Activated CD4-positive, alpha-beta memory T cell treated with anti-CD3 and anti-CD28 coated beads, Interleukin-2, amount 10 ng/mL, durations not matched to agents 7 days and 5 days (primary cell): ENCODE measurements at regions of chr11 and their contacts with region 1.

Region 1: DNA sequence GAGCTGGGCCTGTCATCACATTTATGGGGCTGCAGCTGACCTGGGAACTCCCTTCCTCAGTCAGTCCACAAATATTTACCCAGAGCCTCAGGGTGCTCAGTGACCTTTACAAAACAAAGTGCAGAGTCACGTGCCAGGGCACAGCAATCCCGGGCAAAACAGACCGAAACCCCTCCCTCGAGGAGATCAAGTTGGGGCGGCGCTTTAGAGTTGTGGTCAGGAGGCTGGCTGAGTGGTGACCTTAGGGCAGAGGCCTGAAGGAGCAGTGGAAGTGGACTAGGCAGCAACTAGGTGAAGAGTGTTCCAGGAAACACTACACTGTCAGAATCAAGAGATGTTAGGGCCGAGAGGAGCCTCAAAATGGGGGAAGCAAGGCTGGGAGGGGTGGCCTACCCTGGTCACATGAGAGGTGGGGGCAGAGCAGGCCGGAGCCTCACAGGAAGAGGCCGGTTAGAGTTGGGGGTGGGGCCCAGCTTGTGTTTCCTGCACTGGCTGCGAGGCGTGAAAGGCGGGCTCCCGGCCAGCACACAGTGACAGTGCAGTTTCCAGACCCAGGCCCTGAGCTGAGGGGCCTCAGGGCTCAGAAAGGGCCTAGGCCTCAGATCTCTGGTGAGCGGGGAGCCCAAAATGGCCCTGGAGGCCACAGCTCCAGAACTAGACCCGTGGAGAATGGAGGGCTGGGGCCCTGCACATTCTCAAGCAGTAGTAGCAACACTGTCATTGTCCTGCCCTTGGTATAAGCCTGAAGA is 3.7 kb upstream of the NEAT1 start:
- DNase-seq: peak; percentile 95
- H3K4me3 Mint-ChIP-seq: peak overlapping the region; percentile 97
- H3K27ac Mint-ChIP-seq: peak overlapping the region; percentile 99
- H3K4me1 Mint-ChIP-seq: peaks cover 47% of the 10 kb centered on the region
- H3K27me3 Mint-ChIP-seq: peaks cover 5% of the 10 kb centered on the region

Region 2: GRCh38 chr11:65329944-65330403 is 88.9 kb before region 1 on chr11:
- CTCF ChIA-PET with region 1: interaction called, 3 read pairs
- POLR2A ChIA-PET with region 1: interaction called, 21 read pairs
- DNase-seq: peak; percentile 82
- H3K4me3 Mint-ChIP-seq: no peak overlapping the region
- H3K27ac Mint-ChIP-seq: no peak overlapping the region
- H3K4me1 Mint-ChIP-seq: peaks cover 14% of the 10 kb centered on the region
- H3K27me3 Mint-ChIP-seq: no peaks in the 10 kb centered on the region

Region 3: DNA sequence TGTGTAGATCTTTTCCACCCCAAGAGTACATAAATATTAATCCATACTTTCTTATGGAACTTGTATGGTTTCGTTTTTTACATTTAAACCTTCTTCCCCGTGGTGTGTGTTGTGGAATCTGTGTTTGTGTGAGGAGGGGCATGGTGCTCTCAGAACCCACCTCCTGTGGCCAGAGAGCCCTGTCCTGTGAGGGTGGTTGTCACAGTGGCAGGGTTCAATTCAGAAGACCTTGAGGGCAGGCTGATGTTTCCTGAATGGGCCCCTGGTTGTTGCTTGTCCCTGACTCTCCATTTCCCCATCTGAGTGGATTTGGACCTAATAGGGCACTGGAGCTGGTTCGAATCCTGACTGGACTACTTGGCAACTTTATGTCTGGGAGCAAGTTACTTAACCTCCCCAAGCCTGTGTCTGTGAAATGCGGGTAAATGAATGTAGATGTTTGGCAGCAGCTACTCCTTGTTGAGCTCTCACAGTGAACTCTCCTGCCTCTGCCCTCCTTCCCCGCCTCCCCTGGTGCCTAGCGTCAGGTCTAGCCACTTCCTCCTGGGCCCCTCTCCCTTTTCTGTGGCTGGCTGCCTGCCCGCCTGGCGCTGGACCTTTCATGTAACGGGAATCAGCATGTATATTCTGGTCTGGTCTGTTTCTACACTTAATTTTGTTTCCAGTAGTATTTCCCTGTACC is 11.0 kb after region 1 on chr11:
- CTCF ChIA-PET with region 1: interaction called, 34 read pairs
- POLR2A ChIA-PET with region 1: interaction called, 373 read pairs
- DNase-seq: peak; percentile 67
- H3K4me3 Mint-ChIP-seq: peak overlapping the region; percentile 97
- H3K27ac Mint-ChIP-seq: peak overlapping the region; percentile 99
- H3K4me1 Mint-ChIP-seq: peaks cover 81% of the 10 kb centered on the region
- H3K27me3 Mint-ChIP-seq: no peaks in the 10 kb centered on the region

Region 4: DNA sequence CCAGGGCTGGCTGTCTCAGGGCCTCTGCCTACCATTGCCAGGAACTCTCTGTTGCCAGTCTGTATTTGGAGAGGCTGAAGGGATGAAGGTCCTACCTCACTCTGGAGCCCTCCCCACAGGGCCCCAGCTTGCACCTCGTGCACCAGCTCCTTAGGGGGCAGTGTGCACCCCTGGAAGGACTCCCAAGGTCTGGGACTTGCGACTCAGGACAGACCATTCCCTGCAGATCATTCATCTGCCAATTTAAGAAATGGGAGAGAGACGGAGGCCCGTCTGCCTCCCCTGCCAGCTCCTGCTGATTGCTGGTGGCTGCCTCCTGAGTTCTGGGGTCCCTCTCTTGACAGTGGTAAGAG is 52.5 kb after region 1 on chr11:
- CTCF ChIA-PET with region 1: interaction called, 20 read pairs
- POLR2A ChIA-PET with region 1: interaction called, 670 read pairs
- DNase-seq: no peak
- H3K4me3 Mint-ChIP-seq: no peak overlapping the region
- H3K27ac Mint-ChIP-seq: peak overlapping the region; percentile 96
- H3K4me1 Mint-ChIP-seq: peaks cover 38% of the 10 kb centered on the region
- H3K27me3 Mint-ChIP-seq: no peaks in the 10 kb centered on the region

Region 5: DNA sequence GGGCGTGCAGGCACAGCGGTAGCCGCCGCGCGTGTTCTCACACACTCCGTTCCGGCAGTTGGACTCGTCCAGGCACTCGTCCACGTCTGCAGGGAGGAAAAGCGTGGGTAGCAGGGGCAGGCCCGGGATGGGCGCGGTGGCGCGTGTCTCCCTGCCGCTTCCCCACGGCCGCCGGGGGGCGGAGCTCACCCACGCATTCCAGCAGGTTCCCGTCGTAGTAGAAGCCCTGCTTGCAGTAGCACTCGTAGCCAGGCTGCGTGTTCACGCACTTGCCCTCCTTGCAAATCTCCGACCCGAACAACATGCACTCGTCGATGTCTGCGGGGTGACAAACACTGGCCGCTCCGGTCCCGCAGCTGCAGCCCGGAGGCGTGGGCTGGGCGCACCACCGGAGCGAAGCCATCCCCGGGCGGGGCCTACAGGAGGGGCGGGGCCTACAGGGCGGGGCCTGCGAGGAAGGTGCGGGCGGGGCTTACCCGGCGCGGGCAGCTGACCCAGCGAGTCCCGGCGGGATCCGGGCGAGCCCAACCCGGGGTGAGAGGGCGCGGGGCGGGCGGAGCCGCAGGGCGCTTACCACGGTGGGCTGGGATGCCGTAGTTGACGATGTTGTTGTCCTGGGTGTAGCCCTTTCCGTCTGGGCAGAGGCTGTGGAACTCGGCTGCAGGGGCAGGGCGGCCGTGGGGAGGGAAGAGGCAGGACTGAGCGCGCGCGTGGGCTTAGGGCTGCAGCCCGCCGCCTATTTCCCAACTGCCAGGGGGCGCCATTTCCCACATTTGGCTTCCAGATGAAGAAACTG is 121.6 kb after region 1 on chr11:
- CTCF ChIA-PET with region 1: interaction called, 5 read pairs
- POLR2A ChIA-PET with region 1: interaction called, 10 read pairs
- DNase-seq: peak; percentile 92
- H3K4me3 Mint-ChIP-seq: peak overlapping the region; percentile 80
- H3K27ac Mint-ChIP-seq: peak overlapping the region; percentile 74
- H3K4me1 Mint-ChIP-seq: peaks cover 30% of the 10 kb centered on the region
- H3K27me3 Mint-ChIP-seq: no peaks in the 10 kb centered on the region

Region 6: DNA sequence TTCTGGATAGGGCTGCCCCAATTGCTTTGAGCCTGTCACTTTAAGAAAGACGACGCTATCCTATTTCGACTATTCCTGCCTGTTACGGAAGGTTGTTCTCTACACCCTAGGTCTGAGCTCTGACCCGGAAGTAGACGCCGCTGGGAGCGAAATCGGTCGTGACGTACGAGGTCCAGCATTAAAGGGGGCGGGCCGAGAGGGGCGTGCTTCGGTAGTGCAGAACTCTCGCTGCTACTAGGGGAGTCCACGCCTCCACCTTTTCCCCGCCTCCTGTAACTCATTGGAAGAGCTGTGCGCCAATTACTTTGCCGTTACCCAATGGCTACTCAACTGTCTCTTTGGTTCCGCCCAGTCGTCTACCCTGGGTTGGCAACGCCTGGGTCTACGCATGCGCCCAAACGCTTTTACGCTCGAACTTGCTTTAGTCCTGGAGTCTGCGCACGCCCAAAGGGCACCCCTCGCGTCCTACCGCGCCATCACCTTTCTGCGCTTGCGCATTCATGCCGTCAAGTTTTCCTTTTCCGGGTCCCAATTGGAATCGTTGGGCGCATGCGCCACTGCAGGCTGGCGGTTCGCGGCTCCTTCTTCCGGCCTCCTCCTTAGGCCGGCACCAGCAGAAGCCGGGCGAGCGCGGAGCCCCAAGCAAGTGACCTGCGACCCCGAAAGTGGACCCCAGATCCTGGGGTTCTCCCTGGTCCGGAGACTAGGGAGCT is 196.5 kb after region 1 on chr11 and contains the start of gene PCNX3:
- CTCF ChIA-PET with region 1: no interaction called
- POLR2A ChIA-PET with region 1: interaction called, 12 read pairs
- DNase-seq: peak; percentile 100
- H3K4me3 Mint-ChIP-seq: peak within 1 kb of the TSS; percentile 98
- H3K27ac Mint-ChIP-seq: peak within 1 kb of the TSS; percentile 95
- H3K4me1 Mint-ChIP-seq: peaks cover 44% of the 10 kb centered on the region
- H3K27me3 Mint-ChIP-seq: no peaks in the 10 kb centered on the region
- total RNA-seq, gene PCNX3: 39.8 to 40.3 TPM